ENCODE measurements at regions of chr11 and their contacts with region 1.

Region 1: GRCh38 chr11:92870196-92870832 is 99.1 kb upstream of the MTNR1B start:
- DNase-seq: no peak
- H3K4me3 ChIP-seq: no peak overlapping the region
- H3K27ac ChIP-seq: no peak overlapping the region
- H3K4me1 ChIP-seq: peaks cover 0 to 44% (median 20%) of the 10 kb centered on the region in 4 donors
- H3K27me3 ChIP-seq: no peaks in the 10 kb centered on the region
- CTCF ChIP-seq: no peak
- EP300 ChIP-seq: no peak
- POLR2A ChIP-seq: no peak

Region 2: DNA sequence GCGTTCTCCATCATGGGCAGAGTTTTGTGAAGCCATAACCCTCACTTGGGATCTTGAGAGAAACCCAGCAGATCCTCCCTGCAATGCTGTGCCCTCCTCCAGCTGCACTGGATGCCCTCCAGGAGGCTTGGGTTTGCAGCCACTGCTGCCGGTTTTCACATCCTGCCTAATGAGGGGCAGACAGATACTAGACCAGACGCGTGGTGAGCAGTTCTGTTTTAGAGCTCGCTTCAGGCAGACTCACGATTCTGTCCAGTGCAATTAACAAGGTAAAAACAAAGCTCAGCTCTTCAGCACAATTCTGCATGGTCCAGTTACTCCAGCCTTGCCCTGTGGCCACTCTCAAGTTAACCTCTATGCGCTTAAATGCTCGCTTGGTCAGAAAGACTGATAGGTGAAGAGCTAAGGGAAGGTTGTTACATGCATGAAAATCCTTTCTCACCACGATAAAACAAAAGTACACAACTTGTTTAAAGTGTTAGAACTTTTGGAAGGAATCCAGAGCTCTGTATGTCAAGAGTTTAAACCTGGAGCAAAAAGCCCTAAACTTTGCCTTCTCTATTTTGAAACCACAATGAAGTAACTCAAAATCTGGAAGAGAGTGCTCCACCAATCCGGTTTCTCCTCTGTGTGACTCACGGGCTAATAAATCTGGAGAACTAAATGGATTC is 938.0 kb before region 1 on chr11:
- intact Hi-C with region 1: loop called (anchors 10 kb)
- DNase-seq: no peak
- H3K4me3 ChIP-seq: peak overlapping the region in 1 of 4 donors; percentile 3
- H3K27ac ChIP-seq: peak overlapping the region in 3 of 4 donors; percentile 1 to 59 (median 48)
- H3K4me1 ChIP-seq: peaks cover 0 to 28% (median 17%) of the 10 kb centered on the region in 4 donors
- H3K27me3 ChIP-seq: no peaks in the 10 kb centered on the region
- CTCF ChIP-seq: no peak
- EP300 ChIP-seq: no peak
- POLR2A ChIP-seq: no peak